Left ventricle myocardium inferior (tissue), 1 donor: ENCODE measurements at regions of chr5 and their contacts with region 1.

Region 1: DNA sequence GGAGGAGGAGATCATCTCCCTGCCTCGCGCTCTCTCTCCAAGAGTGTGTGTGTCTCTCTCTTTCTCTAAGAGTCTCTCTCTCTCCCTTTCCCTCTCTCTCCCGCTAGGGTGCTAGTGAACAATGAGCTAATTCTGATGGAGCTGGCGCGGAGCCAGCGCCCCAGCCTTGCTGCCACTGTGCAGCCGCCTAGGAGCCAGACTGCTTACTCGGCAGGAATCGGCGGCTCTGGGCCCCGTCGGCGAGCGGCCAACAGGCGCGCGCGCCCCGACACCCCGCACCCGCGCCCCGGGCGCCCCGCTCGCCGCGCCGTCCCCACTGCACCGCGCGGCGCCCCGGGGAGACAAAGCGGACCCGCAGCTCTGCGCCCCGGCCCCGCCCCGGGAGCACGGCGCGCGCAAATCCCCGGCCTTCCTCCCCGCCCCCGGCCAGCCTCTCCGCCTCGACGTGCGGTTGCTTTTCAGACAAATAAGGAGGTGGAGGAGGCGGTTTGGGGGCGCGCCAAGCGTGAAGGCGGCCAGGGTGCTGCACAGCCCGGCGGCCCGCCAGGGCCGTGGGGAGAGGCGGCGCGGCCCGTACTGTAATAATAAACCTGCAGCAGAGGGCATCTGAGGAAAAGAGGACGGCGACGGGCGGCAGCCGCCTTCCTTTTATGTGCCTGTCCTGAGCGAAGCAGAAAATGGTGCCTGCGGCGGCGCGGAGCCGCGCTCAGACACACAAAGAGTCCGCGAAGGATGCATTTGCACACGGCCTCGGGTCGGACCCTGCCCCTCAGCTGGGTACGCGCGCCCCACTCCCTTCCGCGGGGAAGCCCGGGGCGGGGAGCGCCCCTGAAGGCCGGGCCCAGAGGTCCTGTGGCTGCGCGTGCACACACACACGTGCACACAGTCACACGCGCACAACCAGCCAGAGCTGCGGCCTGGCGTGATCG is 625 bp upstream of the NREP start:
- DNase-seq: peak; percentile 97
- H3K4me3 ChIP-seq: peak overlapping the region; percentile 80
- H3K27ac ChIP-seq: peak overlapping the region; percentile 97
- H3K4me1 ChIP-seq: peaks cover 49% of the 10 kb centered on the region
- H3K27me3 ChIP-seq: no peaks in the 10 kb centered on the region
- CTCF ChIP-seq: peak; percentile 58

Region 2: GRCh38 chr5:111550279-111551020 is 207.2 kb before region 1 on chr5:
- intact Hi-C with region 1: loop called (anchors 5 kb)
- DNase-seq: peak; percentile 47
- H3K4me3 ChIP-seq: peak overlapping the region; percentile 24
- H3K27ac ChIP-seq: peak overlapping the region; percentile 84
- H3K4me1 ChIP-seq: peaks cover 40% of the 10 kb centered on the region
- H3K27me3 ChIP-seq: no peaks in the 10 kb centered on the region
- CTCF ChIP-seq: peak; percentile 78

Region 3: GRCh38 chr5:111901296-111901695 is 143.7 kb after region 1 on chr5:
- intact Hi-C with region 1: no loop called
- DNase-seq: no peak
- H3K4me3 ChIP-seq: no peak overlapping the region
- H3K27ac ChIP-seq: no peak overlapping the region
- H3K4me1 ChIP-seq: no peaks in the 10 kb centered on the region
- H3K27me3 ChIP-seq: no peaks in the 10 kb centered on the region
- CTCF ChIP-seq: no peak